ENCODE measurements at regions of chr2 and their contacts with region 1.

Region 1: DNA sequence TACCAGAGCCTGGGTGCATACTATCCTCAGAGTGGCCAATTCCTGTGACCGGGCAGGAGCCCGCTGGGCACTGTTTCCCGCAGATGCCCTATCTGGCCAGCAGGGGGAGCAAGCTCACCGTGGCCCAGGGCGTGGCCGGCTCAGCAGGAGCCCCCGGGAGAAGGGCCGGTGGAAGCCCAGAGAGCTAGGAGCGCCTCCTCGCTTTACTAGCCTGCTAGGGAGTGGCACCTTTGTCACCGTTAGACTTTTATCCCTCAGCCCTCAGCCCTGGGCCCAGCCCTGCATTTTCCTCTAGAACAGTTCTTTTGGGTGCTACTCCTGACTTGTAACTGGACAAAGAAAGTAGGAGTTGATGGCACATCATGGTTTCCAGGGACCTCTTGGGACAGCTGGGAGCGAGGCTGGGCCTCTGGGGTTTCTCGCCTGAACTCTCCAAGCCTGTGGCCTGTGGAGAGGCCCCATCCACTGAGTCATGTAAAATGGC is 24.0 kb downstream of the TMEM177 start:
- DNase-seq: peak; percentile 83
- H3K4me3 ChIP-seq: no peak overlapping the region
- H3K27ac ChIP-seq: no peak overlapping the region
- H3K4me1 ChIP-seq: no peaks in the 10 kb centered on the region
- H3K27me3 ChIP-seq: no peaks in the 10 kb centered on the region
- CTCF ChIP-seq: peak; percentile 48 to 97 (median 90)
- EP300 ChIP-seq: no peak
- POLR2A ChIP-seq: no peak

Region 2: DNA sequence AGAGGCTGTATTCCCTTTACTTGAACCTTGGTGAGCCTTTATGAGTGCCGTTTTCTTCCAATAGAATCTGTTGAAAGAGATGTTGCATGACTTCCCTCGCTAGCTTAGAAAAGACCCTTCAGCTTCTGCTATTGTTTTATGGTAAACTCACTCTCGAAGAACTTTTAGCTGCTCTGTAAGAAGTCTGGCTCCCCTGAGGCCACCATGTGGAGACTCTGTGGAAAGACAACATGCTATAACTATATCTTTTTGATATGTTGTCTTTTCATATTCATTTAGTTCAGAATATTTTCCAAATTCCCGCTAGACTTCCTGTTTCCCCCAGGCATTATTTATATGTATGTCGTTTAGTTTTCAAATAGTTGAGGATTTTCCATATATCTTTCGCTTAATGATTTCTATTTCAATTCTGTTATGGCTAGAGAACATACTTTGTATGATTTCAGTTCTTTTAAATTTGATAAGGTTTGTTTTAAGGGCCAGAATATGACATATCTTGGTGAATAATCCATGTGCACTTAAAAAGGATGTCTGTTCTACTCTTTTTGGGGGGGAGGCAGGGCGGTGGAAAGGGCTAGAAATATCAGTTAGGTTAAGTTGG is 120.9 kb after region 1 on chr2:
- intact Hi-C with region 1: loop called (anchors 2 kb)
- DNase-seq: no peak
- H3K4me3 ChIP-seq: no peak overlapping the region
- H3K27ac ChIP-seq: no peak overlapping the region
- H3K4me1 ChIP-seq: peaks cover 0 to 8% (median 2%) of the 10 kb centered on the region in 4 donors
- H3K27me3 ChIP-seq: no peaks in the 10 kb centered on the region
- CTCF ChIP-seq: peak in 3 of 4 experiments; percentile 49 to 59 (median 53)
- EP300 ChIP-seq: no peak
- POLR2A ChIP-seq: no peak

Region 3: DNA sequence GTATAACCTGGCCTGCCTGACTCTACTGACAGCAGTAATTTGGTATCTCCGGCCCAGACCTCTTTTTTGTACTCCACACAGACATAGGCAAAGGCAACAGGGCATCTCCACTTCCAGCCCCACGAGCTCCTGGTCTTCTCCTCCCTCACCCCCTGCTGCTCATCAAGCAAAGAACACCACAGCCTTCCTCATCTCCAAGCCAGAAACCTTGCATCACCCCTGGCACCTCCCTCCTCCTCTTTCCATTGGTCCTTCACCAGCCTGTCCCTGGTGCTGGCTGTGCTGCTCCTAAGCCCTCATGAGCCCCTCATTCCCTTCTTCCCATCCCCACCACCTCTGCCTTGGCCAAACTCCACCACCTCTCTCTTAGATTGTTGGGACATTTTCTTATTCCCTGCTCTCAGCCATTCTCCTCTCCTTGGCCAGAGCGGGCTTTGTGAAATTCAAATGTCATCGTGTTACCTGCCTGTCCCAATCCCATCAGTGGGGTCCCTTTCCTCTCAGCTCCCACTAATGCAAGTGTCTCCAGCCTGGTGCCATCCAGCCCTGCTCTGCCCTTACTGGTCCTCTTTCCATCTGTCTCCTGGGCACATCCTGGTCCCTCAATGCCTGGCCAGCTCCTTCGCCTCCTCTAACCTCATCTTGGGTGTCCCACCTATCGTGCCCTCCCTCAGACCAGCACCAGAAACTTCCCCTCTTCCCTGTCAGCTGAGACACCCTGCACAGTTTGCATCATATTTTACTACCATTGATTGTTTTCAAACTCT is 720.4 kb after region 1 on chr2:
- intact Hi-C with region 1: no loop called
- DNase-seq: no peak
- H3K4me3 ChIP-seq: no peak overlapping the region
- H3K27ac ChIP-seq: no peak overlapping the region
- H3K4me1 ChIP-seq: no peaks in the 10 kb centered on the region
- H3K27me3 ChIP-seq: peaks cover 0 to 4% (median 0%) of the 10 kb centered on the region in 3 donors
- CTCF ChIP-seq: no peak
- EP300 ChIP-seq: no peak
- POLR2A ChIP-seq: no peak